ENCODE measurements at regions of chr14 and their contacts with region 1.

Region 1: GRCh38 chr14:56422703-56423213 is 156.8 kb upstream of the TMEM260 start:
- DNase-seq: peak; percentile 93
- H3K4me3 ChIP-seq: no peak overlapping the region
- H3K27ac ChIP-seq: no peak overlapping the region
- H3K4me1 ChIP-seq: no peaks in the 10 kb centered on the region
- H3K27me3 ChIP-seq: no peaks in the 10 kb centered on the region
- CTCF ChIP-seq: peak; percentile 26 to 85 (median 74)
- POLR2A ChIP-seq: no peak

Region 2: GRCh38 chr14:56247468-56248200 is 175.1 kb before region 1 on chr14:
- intact Hi-C with region 1: loop called (anchors 10 kb)
- DNase-seq: no peak
- H3K4me3 ChIP-seq: no peak overlapping the region
- H3K27ac ChIP-seq: no peak overlapping the region
- H3K4me1 ChIP-seq: no peaks in the 10 kb centered on the region
- H3K27me3 ChIP-seq: no peaks in the 10 kb centered on the region
- CTCF ChIP-seq: peak in 2 of 4 experiments; percentile 21 to 37
- POLR2A ChIP-seq: no peak

Region 3: DNA sequence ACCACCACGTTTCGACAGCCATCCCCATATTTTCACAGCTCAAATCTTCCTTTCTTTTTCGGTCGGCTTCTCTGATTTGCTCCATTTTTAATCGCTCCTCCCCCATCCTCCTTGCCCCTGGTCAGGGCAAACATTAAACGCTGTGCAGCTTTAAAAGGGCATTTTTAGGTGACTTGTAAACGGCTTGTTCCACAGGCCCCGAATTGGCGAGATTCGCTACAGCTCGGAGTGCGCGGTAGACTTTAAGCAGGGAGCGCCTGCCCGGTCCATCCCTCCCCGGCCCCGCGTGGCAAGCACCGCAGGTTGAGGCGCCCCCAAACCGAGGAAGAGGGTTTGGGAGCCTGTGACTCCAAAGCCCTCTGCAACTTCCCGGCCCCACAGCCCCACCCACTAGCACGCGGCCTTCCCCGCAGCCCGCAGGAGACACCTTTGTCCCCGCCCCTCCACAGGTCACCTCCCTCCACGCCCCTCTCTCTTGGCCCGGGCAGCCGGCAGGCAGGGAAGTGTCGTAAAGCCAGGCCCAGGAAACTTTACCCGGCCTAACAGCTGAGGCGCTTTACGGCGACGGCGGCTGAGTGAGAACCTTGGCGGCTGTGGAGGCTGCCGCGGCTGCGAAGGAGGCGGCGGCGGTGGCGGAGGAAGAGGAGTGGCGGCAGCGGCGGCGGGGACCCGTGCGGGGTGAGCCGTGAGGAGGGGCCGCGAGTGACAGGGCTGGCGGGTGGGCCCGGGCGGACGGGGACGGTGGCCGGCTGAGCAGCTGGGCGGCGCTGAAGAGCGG is 967.5 kb after region 1 on chr14 and contains the start of gene NAA30:
- intact Hi-C with region 1: no loop called
- DNase-seq: peak; percentile 90
- H3K4me3 ChIP-seq: peak within 1 kb of the TSS; percentile 84 to 89
- H3K27ac ChIP-seq: peak within 1 kb of the TSS; percentile 90 to 92
- H3K4me1 ChIP-seq: no peaks in the 10 kb centered on the region
- H3K27me3 ChIP-seq: no peaks in the 10 kb centered on the region
- CTCF ChIP-seq: peak in 1 of 4 experiments; percentile 12
- POLR2A ChIP-seq: peak; percentile 65
- total RNA-seq, gene NAA30: 13.7 to 27.5 TPM